Body of pancreas (tissue), 4 donors: ENCODE measurements at regions of chr2 and their contacts with region 1.

Region 1: DNA sequence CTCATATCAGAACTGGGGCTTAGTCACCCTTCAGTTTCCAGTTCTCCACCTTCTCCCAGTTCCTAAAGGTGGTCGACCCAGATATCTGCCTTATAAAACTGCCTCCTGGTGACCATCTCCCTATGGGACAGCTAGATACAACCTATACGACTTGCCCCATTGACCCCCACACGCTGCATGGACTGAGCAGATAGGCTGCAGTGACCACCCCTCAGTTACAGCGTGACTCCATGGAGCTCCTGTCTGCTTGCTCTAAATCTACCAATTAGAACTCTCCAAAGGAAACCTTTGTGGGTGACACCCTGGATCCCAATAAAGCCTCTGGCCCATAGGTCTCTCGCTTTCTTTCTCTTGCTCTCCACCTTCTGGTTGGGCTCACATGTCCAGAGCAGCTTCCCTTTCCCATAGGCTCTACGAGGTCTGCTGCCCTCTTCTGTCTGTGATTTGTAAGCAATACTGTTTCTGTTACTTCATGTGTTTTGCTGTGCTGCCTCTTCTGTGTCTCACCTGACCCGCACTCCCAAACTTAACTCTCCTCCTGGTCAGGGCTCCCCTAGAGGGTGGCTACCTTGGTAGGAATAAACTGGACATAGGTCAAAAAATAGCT is 971.3 kb upstream of the FAM98A start:
- DNase-seq: peak; percentile 59 to 74 (median 67)
- ATAC-seq: peak; percentile 95
- H3K4me3 ChIP-seq: no peak overlapping the region
- H3K27ac ChIP-seq: no peak overlapping the region
- H3K4me1 ChIP-seq: no peaks in the 10 kb centered on the region
- H3K27me3 ChIP-seq: no peaks in the 10 kb centered on the region
- CTCF ChIP-seq: peak; percentile 23 to 90 (median 81)
- POLR2A ChIP-seq: no peak

Region 2: DNA sequence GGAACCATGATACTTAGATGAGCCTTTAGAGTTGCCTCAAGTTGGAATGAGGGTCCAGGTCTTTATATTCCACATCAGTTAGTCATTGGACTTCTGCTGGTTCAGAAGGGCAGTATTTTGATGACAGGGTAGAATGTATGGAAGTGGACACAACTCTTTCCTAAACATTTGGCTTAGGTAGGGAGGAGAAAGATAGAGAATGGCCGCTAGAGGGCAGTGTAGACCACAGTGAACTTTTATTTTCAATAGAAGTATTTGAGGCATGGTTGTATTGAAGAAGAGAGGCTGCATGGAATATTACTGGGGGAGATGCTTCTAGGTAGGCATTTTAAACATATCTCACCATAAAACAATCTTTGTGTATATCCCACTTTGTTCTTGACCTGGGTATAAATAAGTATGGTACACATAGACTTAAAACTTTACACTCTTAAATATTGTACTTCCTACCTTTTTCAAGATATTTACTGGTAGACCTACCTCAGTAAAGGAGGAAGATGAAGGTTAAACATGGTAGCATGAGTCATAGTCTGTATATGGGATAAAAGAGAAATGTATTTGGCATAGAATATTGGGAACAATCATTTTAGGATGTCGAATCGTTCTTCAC is 473.7 kb before region 1 on chr2:
- intact Hi-C with region 1: loop called (anchors 5 kb)
- DNase-seq: peak; percentile 70 to 74 (median 72)
- ATAC-seq: peak; percentile 84
- H3K4me3 ChIP-seq: no peak overlapping the region
- H3K27ac ChIP-seq: no peak overlapping the region
- H3K4me1 ChIP-seq: no peaks in the 10 kb centered on the region
- H3K27me3 ChIP-seq: no peaks in the 10 kb centered on the region
- CTCF ChIP-seq: peak; percentile 69 to 89 (median 85)
- POLR2A ChIP-seq: no peak

Region 3: GRCh38 chr2:34332813-34333212 is 237.6 kb before region 1 on chr2:
- intact Hi-C with region 1: no loop called
- DNase-seq: no peak
- ATAC-seq: no peak
- H3K4me3 ChIP-seq: no peak overlapping the region
- H3K27ac ChIP-seq: no peak overlapping the region
- H3K4me1 ChIP-seq: no peaks in the 10 kb centered on the region
- H3K27me3 ChIP-seq: no peaks in the 10 kb centered on the region
- CTCF ChIP-seq: no peak
- POLR2A ChIP-seq: no peak